HEK293 (cell line): ENCODE measurements at regions of chr2 and their contacts with region 1.

Region 1: GRCh38 chr2:200963124-200963917 is at the start of gene ORC2:
- H3K4me3 ChIP-seq: peak within 1 kb of the TSS; percentile 65
- H3K27ac ChIP-seq: peak within 1 kb of the TSS; percentile 94
- H3K4me1 ChIP-seq: peaks cover 9% of the 10 kb centered on the region; the same call in 1 of the 2 replicates
- CTCF ChIP-seq: peak; percentile 99

Region 2: DNA sequence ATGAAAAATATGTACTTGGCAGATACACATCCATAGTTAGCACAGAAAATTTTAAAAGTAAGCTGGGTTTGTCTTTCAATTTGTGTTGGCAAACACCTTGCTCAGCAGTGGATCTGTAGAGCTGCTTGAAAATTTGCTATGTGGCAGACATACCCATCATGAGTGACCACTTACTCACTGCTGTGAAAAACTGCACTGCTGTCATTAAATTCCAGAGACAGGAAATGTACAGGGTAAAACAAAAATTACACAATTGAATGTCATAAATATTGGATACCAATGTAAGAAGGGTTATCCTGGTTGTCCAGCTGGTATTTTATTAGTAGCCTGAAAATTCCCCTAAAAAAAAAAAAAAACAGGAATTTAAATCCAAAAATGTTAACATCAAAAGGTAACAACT is 49.7 kb before region 1 on chr2:
- CTCF ChIA-PET with region 1: no interaction called
- POLR2A ChIA-PET with region 1: interaction called, 12 read pairs
- H3K4me3 ChIP-seq: no peak overlapping the region
- H3K27ac ChIP-seq: no peak overlapping the region
- H3K4me1 ChIP-seq: no peaks in the 10 kb centered on the region
- CTCF ChIP-seq: no peak

Region 3: DNA sequence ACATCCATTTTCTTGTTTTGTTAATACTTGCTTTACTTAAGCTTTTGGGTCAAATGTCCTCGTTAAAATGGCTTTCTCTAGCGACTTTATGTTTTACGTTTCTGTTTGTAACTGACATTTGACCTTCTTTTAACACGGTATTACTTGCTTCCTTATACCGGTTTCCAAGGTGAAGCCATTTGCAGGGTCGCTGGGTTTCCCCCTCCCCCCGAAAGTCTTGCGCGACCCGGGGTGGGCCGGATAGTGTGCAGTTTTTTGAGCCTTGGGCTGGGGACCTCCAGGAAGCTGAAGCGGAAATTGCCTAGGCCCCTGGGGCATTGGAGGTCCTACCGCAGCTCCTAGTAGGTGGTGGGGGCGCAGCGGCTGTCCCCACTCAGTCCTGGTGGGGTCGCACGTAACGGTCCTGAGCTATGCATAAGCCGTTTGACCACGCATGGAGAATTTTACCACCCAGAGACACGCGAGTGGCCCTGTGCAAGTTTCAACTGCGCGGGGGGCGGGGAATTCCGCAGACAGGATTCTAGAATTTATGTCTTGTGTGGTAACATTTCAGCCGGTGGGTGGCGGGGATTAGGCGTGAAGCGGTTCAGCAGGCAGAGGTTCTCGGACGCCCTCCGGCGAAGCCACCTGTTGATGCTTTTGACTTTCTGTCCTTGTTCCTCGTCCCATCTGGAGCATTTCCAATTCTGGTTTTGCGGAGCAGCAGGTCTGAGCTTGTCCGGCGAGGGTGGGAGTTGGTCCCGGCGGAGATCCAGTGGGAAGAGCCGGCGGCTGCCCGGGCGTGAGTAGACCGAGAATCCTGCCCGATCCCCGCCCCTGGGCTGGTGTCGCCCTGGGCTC is 155.0 kb after region 1 on chr2:
- CTCF ChIA-PET with region 1: no interaction called
- POLR2A ChIA-PET with region 1: interaction called, 11 read pairs
- H3K4me3 ChIP-seq: peak overlapping the region; percentile 40
- H3K27ac ChIP-seq: peak overlapping the region; percentile 95
- H3K4me1 ChIP-seq: peaks cover 5% of the 10 kb centered on the region; the same call in 1 of the 2 replicates
- CTCF ChIP-seq: peak; percentile 94